Heart right ventricle (tissue), 16 donors: ENCODE measurements at regions of chr9 and their contacts with region 1.

Region 1: DNA sequence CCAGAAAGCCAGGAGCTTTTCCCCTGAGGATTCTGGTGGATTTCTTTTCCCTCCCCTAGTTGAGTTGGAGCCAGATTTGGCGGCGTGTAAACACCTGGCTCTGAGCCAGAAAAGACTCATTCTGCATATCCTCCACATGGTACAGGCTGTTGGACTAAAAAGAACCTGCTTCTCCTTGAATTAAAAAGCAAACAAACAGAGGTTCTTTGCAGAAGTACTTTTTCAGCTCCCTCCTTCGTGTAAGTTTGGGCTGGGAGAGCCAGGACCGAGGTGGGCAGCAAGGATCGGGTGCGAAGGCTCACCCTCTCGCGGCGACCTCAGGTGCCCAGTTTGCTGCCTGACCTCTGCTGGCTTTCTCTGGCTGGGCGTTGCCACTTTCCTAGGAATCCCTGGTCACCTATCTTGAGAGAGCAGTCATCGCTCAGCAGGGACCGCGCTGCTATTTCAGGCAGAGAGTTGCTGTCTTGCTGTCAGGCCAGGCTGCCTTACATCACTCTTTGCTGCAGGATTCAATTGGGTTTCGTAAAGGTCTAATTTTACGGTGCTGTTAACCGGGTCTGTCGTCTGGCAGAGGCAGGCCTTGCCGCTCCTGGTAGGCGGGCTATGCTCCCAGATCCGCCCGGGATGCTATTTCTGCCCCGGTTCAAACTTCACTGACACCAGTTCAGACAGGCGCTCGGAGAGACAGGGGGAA is 3.2 kb downstream of the PAPPA start:
- DNase-seq: peak; percentile 63 to 79
- ATAC-seq: peak; percentile 84 to 98 (median 94)
- H3K4me3 ChIP-seq: peak overlapping the region in 9 of 10 donors; percentile 3 to 65 (median 43)
- H3K27ac ChIP-seq: peak overlapping the region; percentile 74 to 95 (median 87)
- H3K4me1 ChIP-seq: peaks cover 6 to 41% (median 20%) of the 10 kb centered on the region in 9 donors
- H3K27me3 ChIP-seq: peaks cover 0 to 60% (median 5%) of the 10 kb centered on the region in 7 donors
- CTCF ChIP-seq: no peak

Region 2: DNA sequence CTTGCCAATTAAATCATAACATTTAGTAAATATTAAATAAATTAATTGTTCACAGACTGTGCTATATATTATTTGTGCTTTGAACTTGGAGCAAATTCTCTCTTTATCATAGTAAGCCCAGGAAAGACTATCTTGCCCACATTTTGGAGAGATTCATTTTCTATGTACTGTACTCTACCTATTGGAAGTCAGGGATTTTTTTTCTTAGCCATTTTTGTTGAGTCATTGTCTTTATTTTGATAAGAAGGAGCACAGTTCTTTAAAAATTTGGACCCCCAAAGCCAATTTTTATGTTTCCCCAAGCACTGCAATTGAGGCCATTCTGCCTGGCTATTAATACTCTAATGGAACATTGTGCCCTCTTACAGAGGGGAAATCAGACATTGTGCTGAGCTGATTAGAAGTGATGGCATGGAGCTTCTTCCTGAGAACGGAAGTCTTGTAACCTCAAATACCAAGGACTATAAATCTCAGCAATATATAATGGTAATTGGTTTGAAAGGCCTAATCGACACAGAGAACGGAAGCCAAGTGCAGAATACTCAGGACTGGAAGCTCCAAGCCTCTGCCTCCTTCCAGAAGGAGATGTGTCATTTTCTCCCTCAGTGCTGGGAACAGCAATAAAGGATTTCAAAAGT is 191.9 kb before region 1 on chr9:
- intact Hi-C with region 1: no loop called
- DNase-seq: no peak
- ATAC-seq: no peak
- H3K4me3 ChIP-seq: no peak overlapping the region
- H3K27ac ChIP-seq: no peak overlapping the region
- H3K4me1 ChIP-seq: no peaks in the 10 kb centered on the region
- H3K27me3 ChIP-seq: no peaks in the 10 kb centered on the region
- CTCF ChIP-seq: no peak

Region 3: DNA sequence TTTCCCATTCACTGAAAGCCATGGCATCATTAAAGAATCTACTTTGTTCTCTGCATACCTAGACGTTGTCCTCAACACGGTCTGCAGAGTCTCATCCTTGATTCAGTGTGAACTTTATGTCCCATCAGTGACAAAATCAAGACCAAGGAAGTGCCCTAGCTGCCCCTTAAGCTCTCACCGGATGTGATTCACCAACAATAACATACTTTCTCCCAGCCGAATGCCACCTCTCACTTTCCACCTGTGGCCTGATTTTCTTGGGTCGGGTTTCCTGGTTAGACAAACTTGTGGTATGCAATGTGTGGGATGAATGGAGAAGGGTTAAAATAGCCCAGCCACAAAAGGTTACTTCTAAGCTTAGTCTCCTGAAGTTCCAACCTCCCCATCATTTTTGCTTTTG is 148.5 kb before region 1 on chr9:
- intact Hi-C with region 1: no loop called
- DNase-seq: no peak
- ATAC-seq: no peak
- H3K4me3 ChIP-seq: no peak overlapping the region
- H3K27ac ChIP-seq: no peak overlapping the region
- H3K4me1 ChIP-seq: no peaks in the 10 kb centered on the region
- H3K27me3 ChIP-seq: no peaks in the 10 kb centered on the region
- CTCF ChIP-seq: no peak

Region 4: DNA sequence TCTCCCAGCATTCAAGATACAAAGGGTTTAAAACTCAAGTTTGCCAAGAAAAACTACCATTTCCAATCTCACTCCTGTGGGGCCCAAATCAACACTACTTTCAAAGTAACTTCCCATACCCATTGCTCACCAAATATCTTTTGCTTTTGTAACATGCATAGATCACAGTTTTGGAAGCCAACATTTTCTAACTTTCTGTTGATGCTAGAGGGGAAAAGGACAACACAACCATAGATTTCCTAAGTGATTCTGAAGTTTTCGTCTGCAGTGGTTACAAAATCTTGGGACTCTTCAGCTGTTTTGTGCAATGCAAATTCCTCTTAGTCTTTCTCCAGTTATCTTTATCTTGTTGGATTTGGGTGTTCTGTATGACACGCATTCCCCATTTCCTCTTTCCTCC is 97.3 kb before region 1 on chr9:
- intact Hi-C with region 1: no loop called
- DNase-seq: no peak
- ATAC-seq: no peak
- H3K4me3 ChIP-seq: no peak overlapping the region
- H3K27ac ChIP-seq: no peak overlapping the region
- H3K4me1 ChIP-seq: no peaks in the 10 kb centered on the region
- H3K27me3 ChIP-seq: no peaks in the 10 kb centered on the region
- CTCF ChIP-seq: no peak

Region 5: GRCh38 chr9:116133163-116133562 is 23.6 kb before region 1 on chr9:
- intact Hi-C with region 1: no loop called
- DNase-seq: no peak
- ATAC-seq: no peak
- H3K4me3 ChIP-seq: no peak overlapping the region
- H3K27ac ChIP-seq: no peak overlapping the region
- H3K4me1 ChIP-seq: no peaks in the 10 kb centered on the region
- H3K27me3 ChIP-seq: no peaks in the 10 kb centered on the region
- CTCF ChIP-seq: no peak

Region 6: GRCh38 chr9:116494815-116495634 is 338.3 kb after region 1 on chr9:
- intact Hi-C with region 1: loop called in 8 of 10 experiments (anchors 5 to 10 kb)
- DNase-seq: peak in 1 of 2 donors; percentile 9
- ATAC-seq: peak in 1 of 8 donors; percentile 37
- H3K4me3 ChIP-seq: no peak overlapping the region
- H3K27ac ChIP-seq: no peak overlapping the region
- H3K4me1 ChIP-seq: peaks cover 0 to 9% (median 0%) of the 10 kb centered on the region in 9 donors
- H3K27me3 ChIP-seq: no peaks in the 10 kb centered on the region
- CTCF ChIP-seq: peak; percentile 35 to 76 (median 66)